ENCODE measurements at regions of chr19 and their contacts with region 1.

Region 1: GRCh38 chr19:12495002-12495802 is 10.6 kb upstream of the ZNF709 start:
- DNase-seq: peak; percentile 93 to 94
- ATAC-seq: peak; percentile 99 to 100 (median 100)
- H3K4me3 ChIP-seq: peak overlapping the region; percentile 43 to 79 (median 68)
- H3K27ac ChIP-seq: peak overlapping the region; percentile 32 to 94 (median 86)
- H3K4me1 ChIP-seq: peaks cover 0 to 15% (median 7%) of the 10 kb centered on the region in 9 donors
- H3K27me3 ChIP-seq: no peaks in the 10 kb centered on the region
- CTCF ChIP-seq: peak in 7 of 9 donors; percentile 38 to 75 (median 49)

Region 2: DNA sequence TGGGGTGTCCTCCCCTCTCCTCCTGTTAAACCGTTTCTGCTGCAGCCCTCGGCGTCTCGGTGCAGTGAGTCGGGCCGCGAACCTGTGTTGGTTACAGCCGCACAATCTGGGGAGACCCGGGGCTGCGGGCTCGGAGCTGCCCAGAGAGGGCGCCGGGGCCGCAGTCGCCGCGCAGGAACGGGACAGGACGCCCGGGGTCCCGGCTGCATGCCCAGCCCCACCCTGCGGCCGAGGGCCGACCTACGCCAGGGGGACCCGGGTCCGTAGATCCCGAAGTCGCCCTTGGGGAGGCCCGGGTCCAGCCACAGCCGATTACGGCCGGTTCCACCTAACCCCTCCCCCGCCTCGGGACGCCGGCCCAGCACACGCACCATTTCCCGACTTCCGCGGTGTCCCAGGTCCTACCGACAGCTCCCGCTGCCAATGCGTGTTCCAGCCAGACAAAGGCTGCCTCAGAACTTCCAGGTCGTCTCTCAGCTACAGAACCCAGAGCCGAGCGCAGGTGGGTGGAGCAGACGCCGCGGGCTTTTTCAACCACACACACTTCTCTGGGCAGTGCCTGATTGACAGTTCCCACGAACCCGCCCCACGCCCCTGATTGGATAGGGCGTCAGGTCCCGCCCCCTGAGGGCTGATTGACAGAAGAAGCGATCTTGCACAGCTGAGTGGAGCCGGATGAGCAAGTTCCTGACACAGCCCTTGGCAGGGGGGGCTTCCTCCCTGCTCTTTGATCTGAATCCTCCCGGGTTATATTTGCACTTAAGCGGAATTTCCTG is 54.5 kb before region 1 on chr19 and contains the start of gene ZNF443:
- intact Hi-C with region 1: loop called in 1 of 10 experiments (anchors 10 kb)
- DNase-seq: peak; percentile 99
- ATAC-seq: peak; percentile 100
- H3K4me3 ChIP-seq: peak within 1 kb of the TSS; percentile 33 to 95 (median 71)
- H3K27ac ChIP-seq: peak within 1 kb of the TSS in 9 of 10 donors; percentile 72 to 83 (median 80)
- H3K4me1 ChIP-seq: peaks cover 0 to 12% (median 0%) of the 10 kb centered on the region in 9 donors
- H3K27me3 ChIP-seq: no peaks in the 10 kb centered on the region
- CTCF ChIP-seq: peak in 4 of 9 donors; percentile 12 to 24 (median 17)
- total RNA-seq, gene ZNF443: 1.2 to 3.4 (median 2.5) TPM

Region 3: GRCh38 chr19:12521996-12522395 is 26.8 kb after region 1 on chr19:
- intact Hi-C with region 1: no loop called
- DNase-seq: no peak
- ATAC-seq: no peak
- H3K4me3 ChIP-seq: no peak overlapping the region
- H3K27ac ChIP-seq: no peak overlapping the region
- H3K4me1 ChIP-seq: no peaks in the 10 kb centered on the region
- H3K27me3 ChIP-seq: no peaks in the 10 kb centered on the region
- CTCF ChIP-seq: no peak

Region 4: DNA sequence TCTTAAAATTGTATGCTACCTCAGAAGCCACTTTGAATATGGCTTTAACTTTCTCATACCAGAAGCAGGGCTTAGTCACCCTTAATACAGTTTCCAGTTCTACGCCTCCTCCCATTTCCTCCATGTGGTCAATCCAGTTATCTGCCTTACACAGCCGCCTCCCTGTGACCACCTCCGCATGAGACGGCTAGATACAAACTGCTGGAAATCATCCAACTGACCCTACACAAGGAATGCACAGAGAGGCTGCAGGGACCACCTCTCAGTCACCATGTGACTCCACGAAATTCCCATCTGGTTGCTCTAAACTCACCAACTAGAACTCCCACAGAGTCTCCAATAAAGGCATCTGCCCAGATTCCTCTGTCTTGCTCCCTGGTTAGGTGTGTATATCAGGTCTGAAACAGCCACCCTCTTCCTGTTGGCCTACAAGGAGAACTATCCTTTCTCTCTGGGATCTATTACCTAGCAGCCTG is 49.2 kb after region 1 on chr19:
- intact Hi-C with region 1: loop called in 1 of 10 experiments (anchors 5 kb)
- DNase-seq: peak in 1 of 2 donors; percentile 17
- ATAC-seq: peak in 5 of 8 donors; percentile 34 to 72 (median 56)
- H3K4me3 ChIP-seq: no peak overlapping the region
- H3K27ac ChIP-seq: peak overlapping the region in 5 of 10 donors; percentile 4 to 64 (median 38)
- H3K4me1 ChIP-seq: peaks cover 0 to 49% (median 30%) of the 10 kb centered on the region in 9 donors
- H3K27me3 ChIP-seq: no peaks in the 10 kb centered on the region
- CTCF ChIP-seq: no peak

Region 5: DNA sequence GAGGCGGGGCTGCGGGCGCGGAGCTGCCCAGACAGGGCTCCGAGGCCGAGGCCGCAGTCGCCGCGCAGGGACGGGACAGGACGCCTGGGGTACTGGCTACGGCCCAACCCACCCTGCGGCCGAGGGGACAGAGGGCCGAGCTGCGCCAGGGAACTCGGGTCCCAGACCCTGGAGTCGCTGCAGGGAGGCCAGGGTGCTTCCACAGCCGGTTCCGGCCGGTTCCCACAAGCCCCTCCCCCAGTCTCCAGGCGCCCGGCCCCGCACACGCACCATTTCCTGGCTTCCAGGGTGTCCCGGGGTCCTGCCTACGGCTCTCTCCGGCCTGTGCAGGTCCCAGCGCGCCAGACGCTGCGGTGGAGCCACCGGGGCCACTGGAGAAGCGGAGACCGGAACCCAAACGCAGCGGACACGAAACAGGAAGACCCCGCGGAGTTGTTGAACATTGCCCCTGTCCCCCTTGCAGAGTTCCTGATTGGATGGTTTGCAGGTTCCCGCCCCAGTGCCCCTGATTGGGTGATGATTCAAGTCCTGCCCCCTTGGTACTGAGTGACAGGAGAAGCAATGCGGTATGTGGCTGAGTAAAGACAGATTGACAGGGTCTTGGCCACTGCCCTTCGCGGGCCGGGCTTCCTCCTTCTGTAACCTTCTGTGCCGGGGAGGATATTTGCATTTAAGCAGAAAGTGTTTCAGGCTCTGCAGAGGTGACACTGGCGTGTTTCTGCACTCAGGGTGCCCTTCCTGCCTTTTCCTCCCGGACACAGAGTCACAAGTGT is 56.0 kb after region 1 on chr19 and contains the start of gene ZNF564:
- intact Hi-C with region 1: loop called in 1 of 10 experiments (anchors 5 kb)
- DNase-seq: peak; percentile 89 to 98
- ATAC-seq: peak; percentile 97 to 99 (median 98)
- H3K4me3 ChIP-seq: peak within 1 kb of the TSS; percentile 68 to 95 (median 79)
- H3K27ac ChIP-seq: peak within 1 kb of the TSS; percentile 94 to 98 (median 95)
- H3K4me1 ChIP-seq: peaks cover 3 to 55% (median 37%) of the 10 kb centered on the region in 9 donors
- H3K27me3 ChIP-seq: peaks cover 0 to 5% (median 0%) of the 10 kb centered on the region in 7 donors
- CTCF ChIP-seq: no peak
- total RNA-seq, gene ZNF564: 5.9 to 11.2 (median 9.5) TPM

Measured in heart right ventricle (tissue), 16 donors.